Aorta (tissue), 5 donors: ENCODE measurements at regions of chr5 and their contacts with region 1.

Region 1: GRCh38 chr5:134038138-134038537 is 33.4 kb upstream of the VDAC1 start:
- DNase-seq: no peak
- ATAC-seq: no peak
- H3K4me3 ChIP-seq: no peak overlapping the region
- H3K27ac ChIP-seq: no peak overlapping the region
- H3K4me1 ChIP-seq: no peaks in the 10 kb centered on the region
- H3K27me3 ChIP-seq: no peaks in the 10 kb centered on the region

Region 2: GRCh38 chr5:133111299-133111698 is 926.8 kb before region 1 on chr5:
- intact Hi-C with region 1: no loop called
- DNase-seq: peak; percentile 90 to 97
- ATAC-seq: peak; percentile 90
- H3K4me3 ChIP-seq: no peak overlapping the region
- H3K27ac ChIP-seq: no peak overlapping the region
- H3K4me1 ChIP-seq: no peaks in the 10 kb centered on the region
- H3K27me3 ChIP-seq: no peaks in the 10 kb centered on the region

Region 3: GRCh38 chr5:134053840-134054338 is 15.8 kb after region 1 on chr5:
- intact Hi-C with region 1: no loop called
- DNase-seq: no peak
- ATAC-seq: no peak
- H3K4me3 ChIP-seq: no peak overlapping the region
- H3K27ac ChIP-seq: no peak overlapping the region
- H3K4me1 ChIP-seq: no peaks in the 10 kb centered on the region
- H3K27me3 ChIP-seq: no peaks in the 10 kb centered on the region

Region 4: DNA sequence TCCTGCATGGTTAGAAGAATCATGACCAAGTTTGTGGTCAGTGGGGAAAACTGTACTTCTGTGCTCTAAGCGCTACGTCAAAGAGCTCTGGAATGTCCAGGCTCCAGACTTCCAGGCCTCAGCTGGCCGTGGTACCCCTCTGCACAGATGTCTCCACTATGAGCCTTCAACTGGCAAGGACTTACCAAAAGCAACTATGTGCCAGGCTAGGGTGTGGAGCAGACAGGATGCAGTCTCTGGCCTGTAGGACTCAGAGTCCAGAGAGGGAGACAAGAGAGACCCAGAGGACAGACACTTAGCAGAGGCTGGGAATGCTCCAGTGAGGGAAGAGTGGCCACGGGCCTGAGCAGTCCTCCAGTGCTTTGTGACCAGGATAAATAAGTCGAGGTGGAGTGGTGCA is 45.4 kb after region 1 on chr5:
- intact Hi-C with region 1: no loop called
- DNase-seq: no peak
- ATAC-seq: no peak
- H3K4me3 ChIP-seq: no peak overlapping the region
- H3K27ac ChIP-seq: no peak overlapping the region
- H3K4me1 ChIP-seq: no peaks in the 10 kb centered on the region
- H3K27me3 ChIP-seq: no peaks in the 10 kb centered on the region

Region 5: DNA sequence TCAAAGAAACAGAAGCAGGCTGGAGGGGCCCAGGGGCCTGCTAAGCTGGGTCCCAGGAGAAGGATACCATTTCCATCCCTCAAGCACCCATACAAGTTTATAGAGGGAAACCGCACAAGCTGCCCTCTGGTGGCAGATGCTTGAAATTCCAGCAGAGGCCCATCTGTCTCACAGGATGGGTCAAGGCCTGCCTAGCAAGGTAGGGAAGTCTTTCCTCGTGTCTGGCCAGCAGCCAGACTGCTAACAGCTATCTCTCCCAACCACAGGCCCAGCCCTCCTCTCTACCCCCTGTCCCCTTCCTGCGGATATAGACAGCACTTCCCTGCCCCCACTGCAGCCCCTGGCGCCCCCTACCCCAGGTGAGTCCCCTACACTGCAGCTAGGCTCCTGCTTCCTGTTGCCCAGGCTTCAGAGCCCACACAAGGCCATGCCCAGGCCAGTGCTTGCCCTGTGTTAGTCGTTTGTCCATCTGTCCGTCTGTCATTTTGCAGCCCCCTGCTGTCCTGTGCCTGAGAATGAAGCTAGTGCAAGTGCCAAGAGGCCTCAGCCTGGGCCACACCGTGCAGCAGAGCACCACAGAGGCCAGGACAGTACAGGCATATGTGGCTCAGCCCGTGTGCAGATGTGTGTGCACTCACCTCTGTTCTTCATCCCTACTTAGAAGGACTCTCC is 102.5 kb after region 1 on chr5:
- intact Hi-C with region 1: loop called (anchors 2 kb)
- DNase-seq: peak; percentile 71 to 81
- ATAC-seq: peak; percentile 66
- H3K4me3 ChIP-seq: no peak overlapping the region
- H3K27ac ChIP-seq: no peak overlapping the region
- H3K4me1 ChIP-seq: no peaks in the 10 kb centered on the region
- H3K27me3 ChIP-seq: no peaks in the 10 kb centered on the region

Region 6: GRCh38 chr5:134204575-134204974 is 166.4 kb after region 1 on chr5:
- intact Hi-C with region 1: no loop called
- DNase-seq: no peak
- ATAC-seq: no peak
- H3K4me3 ChIP-seq: no peak overlapping the region
- H3K27ac ChIP-seq: no peak overlapping the region
- H3K4me1 ChIP-seq: no peaks in the 10 kb centered on the region
- H3K27me3 ChIP-seq: no peaks in the 10 kb centered on the region

Region 7: GRCh38 chr5:134289509-134290113 is 251.5 kb after region 1 on chr5:
- intact Hi-C with region 1: loop called in 1 of 2 experiments (anchors 5 kb)
- DNase-seq: no peak
- ATAC-seq: peak; percentile 78
- H3K4me3 ChIP-seq: no peak overlapping the region
- H3K27ac ChIP-seq: no peak overlapping the region
- H3K4me1 ChIP-seq: no peaks in the 10 kb centered on the region
- H3K27me3 ChIP-seq: no peaks in the 10 kb centered on the region